ENCODE measurements at regions of chr22 and their contacts with region 1.

Region 1: GRCh38 chr22:29031227-29032011 is 30.2 kb downstream of the C22orf31 start:
- DNase-seq: peak; percentile 34 to 65
- ATAC-seq: peak; percentile 34

Region 2: DNA sequence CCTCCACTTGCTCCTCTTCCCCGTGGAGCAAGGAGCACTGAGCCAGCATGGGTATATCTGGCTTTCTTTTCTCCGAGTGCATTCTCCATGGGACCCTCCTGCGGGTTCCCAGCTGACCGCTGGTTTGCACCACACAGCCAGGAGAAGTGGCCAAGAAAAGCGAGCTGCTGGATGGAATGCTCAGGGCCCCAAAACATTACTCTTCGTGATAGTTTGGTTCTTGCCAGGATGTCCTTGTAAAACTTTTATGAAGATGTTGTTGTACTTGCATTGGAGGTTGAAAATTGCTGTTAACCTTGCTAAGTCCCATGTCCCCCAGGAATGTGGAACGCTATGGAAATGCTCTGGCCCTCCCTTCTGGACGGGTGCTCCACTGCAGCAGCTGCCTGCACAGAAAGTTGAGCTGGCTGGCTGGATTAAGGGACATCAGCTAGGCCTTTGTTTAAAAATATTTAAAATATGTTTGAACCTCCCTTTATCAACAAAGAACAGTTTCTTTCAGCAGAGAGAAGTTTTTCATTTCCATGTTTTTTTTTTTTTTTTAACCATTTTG is 79.4 kb before region 1 on chr22:
- intact Hi-C with region 1: loop called in 1 of 2 experiments (anchors 10 kb)
- DNase-seq: peak in 1 of 2 donors; percentile 50
- ATAC-seq: peak; percentile 51

Region 3: GRCh38 chr22:29096736-29097669 is 65.6 kb after region 1 on chr22:
- intact Hi-C with region 1: no loop called
- DNase-seq: no peak
- ATAC-seq: peak; percentile 59

Region 4: DNA sequence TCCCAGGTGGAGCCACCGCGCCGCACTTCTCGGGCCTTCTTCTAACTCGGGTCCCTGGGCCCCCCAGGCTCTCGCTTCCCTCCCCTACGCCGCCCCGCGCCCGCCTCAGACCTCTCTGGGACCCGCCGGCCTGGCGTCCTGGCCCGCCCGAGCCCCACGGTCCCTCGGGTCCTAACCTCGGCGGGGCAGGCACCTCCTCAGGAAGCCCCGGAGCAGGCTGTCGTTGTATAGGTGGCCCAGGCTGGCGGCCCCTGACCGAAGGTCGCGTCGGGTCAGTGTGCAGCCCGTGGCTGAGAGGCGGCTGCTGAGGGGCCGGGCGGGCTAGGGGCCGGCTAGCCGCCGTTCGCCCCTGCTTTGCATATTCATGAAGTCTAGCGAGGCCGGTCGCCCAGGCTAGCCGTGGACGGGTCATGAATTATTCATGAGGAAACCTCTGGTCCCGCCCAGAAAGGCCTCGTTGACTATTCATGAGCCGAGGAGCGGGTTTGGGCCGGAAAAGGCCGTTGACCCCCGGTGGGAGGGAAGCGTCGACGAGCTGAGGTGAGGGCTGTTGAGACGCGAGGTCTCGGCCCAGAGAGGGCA is 1048.6 kb after region 1 on chr22 and contains the start of gene HORMAD2:
- intact Hi-C with region 1: no loop called
- DNase-seq: peak in 1 of 2 donors; percentile 24
- ATAC-seq: peak; percentile 15
- total RNA-seq, gene HORMAD2: not detected

Measured in left colon (tissue), 2 donors.